ENCODE measurements at regions of chr15 and their contacts with region 1.

Region 1: DNA sequence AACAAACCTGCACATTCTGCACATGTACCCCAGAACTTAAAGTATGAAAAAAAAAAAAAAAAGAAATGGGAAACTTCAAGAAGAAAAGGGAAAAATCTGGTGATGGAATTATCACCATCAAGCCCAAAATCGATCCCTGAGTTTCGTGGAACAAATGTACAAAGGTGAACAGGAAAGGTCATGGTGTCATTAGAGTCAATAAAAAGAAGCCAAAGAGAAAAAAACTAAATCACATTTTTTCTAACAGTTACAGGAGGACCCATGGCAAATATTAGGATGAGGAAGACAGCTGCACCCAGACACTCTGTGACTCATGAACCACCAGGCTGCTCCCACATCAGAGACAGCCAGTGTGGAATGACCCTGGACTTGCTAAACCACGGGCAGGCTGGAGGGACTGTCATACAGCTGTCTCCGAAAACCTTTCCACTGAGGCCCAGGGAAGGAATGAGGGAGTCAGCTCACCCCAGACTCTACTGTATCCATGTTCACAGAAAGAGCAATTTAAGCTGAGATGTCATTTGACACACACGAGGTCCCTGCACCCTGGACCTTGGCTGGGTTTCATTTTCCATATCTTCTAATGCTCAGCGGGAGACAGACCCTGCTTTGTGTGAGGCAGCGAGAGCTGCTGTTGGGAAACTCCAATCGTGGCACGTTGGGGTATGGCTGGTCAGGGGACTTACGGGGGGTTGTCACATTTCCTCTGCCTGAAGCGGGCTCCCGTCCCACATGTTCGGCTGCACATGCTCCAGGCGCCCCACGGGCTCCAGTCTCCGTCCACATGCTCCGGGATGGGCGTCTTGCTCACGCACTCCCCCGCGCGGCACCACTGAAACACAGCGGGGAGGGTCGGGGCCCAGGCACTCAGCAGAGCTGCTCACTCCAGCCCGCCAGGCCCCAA is 210.2 kb downstream of the ADAMTS17 start:
- DNase-seq: peak; percentile 57 to 69
- ATAC-seq: peak; percentile 86 to 96
- H3K4me3 ChIP-seq: peak overlapping the region; percentile 36; the same call in 2 of the 3 replicates
- H3K27ac ChIP-seq: no peak overlapping the region
- H3K4me1 ChIP-seq: no peaks in the 10 kb centered on the region
- CTCF ChIP-seq: peak; percentile 35
- EP300 ChIP-seq: no peak
- POLR2A ChIP-seq: no peak
- RAD21 ChIP-seq: peak; percentile 36 to 43; a peak in 3 of 5 replicates

Region 2: GRCh38 chr15:100114571-100114970 is 17.0 kb before region 1 on chr15:
- CTCF ChIA-PET with region 1: interaction called, 10 read pairs
- POLR2A ChIA-PET with region 1: no interaction called
- DNase-seq: no peak
- ATAC-seq: no peak
- H3K4me3 ChIP-seq: no peak overlapping the region
- H3K27ac ChIP-seq: no peak overlapping the region
- H3K4me1 ChIP-seq: peaks cover 5% of the 10 kb centered on the region; the same call in 1 of the 3 replicates
- CTCF ChIP-seq: no peak
- EP300 ChIP-seq: no peak
- POLR2A ChIP-seq: no peak
- RAD21 ChIP-seq: no peak